ENCODE measurements at regions of chr2 and their contacts with region 1.

Region 1: DNA sequence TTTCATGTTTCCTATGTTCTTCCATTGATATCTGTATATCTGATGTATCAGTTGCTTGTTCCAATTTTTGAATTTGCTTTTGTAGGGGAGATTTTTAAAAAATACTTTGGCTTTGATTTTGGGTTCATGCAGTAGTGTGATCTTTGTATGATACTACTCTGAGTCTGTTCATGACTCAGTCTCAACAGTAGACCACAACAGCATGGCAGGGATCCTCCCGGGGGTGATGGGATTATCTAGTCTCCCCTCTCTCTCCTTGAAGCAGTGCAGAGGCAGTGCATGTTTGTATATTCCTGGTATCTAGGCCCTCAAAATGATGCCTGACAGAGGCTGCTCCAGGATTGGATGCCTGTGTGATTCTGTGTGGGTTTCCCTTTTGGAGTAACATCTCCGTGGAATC is 55.3 kb downstream of the G6PC2 start:
- DNase-seq: no peak
- ATAC-seq: no peak
- H3K4me3 ChIP-seq: no peak overlapping the region
- H3K27ac ChIP-seq: no peak overlapping the region
- H3K4me1 ChIP-seq: no peaks in the 10 kb centered on the region
- H3K27me3 ChIP-seq: no peaks in the 10 kb centered on the region
- CTCF ChIP-seq: no peak
- EP300 ChIP-seq: no peak
- POLR2A ChIP-seq: no peak
- RAD21 ChIP-seq: no peak

Region 2: GRCh38 chr2:169095621-169096105 is 139.3 kb after region 1 on chr2:
- CTCF ChIA-PET with region 1: no interaction called
- POLR2A ChIA-PET with region 1: no interaction called
- in situ Hi-C with region 1: loop called (anchors 5 kb)
- intact Hi-C with region 1: no loop called
- DNase-seq: peak; percentile 24 to 83 (median 49)
- ATAC-seq: peak; percentile 92
- H3K4me3 ChIP-seq: no peak overlapping the region
- H3K27ac ChIP-seq: no peak overlapping the region
- H3K4me1 ChIP-seq: peaks cover 0 to 18% of the 10 kb centered on the region in 2 experiments; a peak in 3 of 5 replicates
- H3K27me3 ChIP-seq: no peaks in the 10 kb centered on the region
- CTCF ChIP-seq: no peak
- EP300 ChIP-seq: peak; percentile 63; the same call in 1 of the 2 replicates
- POLR2A ChIP-seq: no peak
- RAD21 ChIP-seq: peak; percentile 17 to 22; a peak in 2 of 4 replicates

Region 3: DNA sequence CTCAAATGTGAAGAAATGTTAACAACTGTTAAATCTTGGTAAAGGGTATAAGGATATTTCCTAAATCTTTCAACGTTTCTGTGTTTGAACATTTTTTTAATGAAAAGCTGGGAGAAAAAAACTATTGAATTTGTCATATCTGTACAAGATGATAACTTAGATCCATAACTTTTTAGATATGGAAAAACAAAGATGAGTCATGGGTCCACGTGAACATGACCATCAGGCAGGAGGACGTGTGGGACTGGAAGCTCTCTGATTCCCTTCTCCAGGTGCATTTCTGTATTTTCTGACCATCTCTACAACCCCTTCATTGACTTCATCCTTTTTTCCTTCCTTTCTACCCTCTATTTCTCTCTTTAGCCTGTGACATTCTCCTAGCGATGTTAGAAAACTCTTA is 254.5 kb after region 1 on chr2:
- CTCF ChIA-PET with region 1: no interaction called
- POLR2A ChIA-PET with region 1: no interaction called
- in situ Hi-C with region 1: loop called (anchors 5 kb)
- intact Hi-C with region 1: no loop called
- DNase-seq: no peak
- ATAC-seq: no peak
- H3K4me3 ChIP-seq: no peak overlapping the region
- H3K27ac ChIP-seq: no peak overlapping the region
- H3K4me1 ChIP-seq: no peaks in the 10 kb centered on the region
- H3K27me3 ChIP-seq: no peaks in the 10 kb centered on the region; a peak in 2 of 5 replicates
- CTCF ChIP-seq: no peak
- EP300 ChIP-seq: no peak
- POLR2A ChIP-seq: no peak
- RAD21 ChIP-seq: no peak

Measured in K562 (cell line).